CD8-positive, alpha-beta T cell (primary cell): ENCODE measurements at regions of chr1 and their contacts with region 1.

Region 1: DNA sequence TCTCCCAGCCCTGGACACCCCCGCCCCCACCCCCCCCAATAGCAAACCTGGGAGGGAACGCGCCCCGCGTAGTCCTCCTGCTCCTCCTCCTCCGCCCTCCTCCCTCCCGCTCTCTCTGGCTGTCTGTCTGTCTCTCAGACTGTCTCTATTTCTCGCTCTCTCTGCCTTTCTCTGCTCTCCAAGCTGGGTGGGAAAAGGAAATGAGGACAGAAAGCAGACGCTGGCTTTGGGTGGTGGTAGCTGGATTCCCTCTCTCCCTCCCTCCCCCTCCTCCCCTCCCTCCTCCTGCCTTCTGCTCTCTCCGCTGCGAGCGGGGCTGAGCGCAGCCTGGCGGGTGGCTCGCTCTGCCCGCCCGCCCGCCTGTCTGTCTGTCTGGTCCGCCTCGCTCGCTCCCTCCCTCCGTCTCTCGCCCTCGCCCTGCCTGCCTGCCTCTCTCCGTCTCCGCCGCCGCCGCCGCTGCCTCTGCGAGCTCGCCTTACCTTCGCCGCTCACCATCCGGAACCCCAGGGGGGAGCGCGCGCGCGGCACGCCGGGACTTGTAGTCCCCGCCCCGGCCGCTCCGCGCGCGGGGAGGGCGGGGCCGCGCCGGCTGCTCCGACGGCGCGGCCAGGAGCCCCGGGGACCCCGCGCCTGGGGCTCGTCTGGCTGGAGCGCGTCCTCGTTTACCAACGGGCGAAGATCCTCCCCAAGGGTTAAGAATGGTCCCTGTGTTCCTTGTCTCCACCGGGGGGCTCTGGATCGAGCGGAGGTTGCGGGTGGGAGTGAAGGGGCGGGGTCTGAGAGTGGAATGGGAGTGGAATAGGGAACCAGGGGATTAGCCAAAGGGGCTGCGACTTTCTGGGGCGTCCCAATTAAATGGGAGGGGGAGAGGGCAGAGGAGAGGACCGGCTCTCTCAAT is at the start of gene AHDC1:
- DNase-seq: peak; percentile 82 to 96 (median 93)
- ATAC-seq: peak; percentile 81
- H3K4me3 ChIP-seq: peak within 1 kb of the TSS; percentile 70 to 86
- H3K4me3 Mint-ChIP-seq: peak within 1 kb of the TSS; percentile 88
- H3K27ac ChIP-seq: peak within 1 kb of the TSS; percentile 57 to 66
- H3K27ac Mint-ChIP-seq: peak within 1 kb of the TSS; percentile 85
- H3K4me1 ChIP-seq: peaks cover 62% of the 10 kb centered on the region
- H3K4me1 Mint-ChIP-seq: peaks cover 41% of the 10 kb centered on the region
- H3K27me3 ChIP-seq: no peaks in the 10 kb centered on the region
- H3K27me3 Mint-ChIP-seq: no peaks in the 10 kb centered on the region
- CTCF ChIP-seq: no peak
- total RNA-seq, gene AHDC1: 19.5 to 21.1 TPM

Region 2: DNA sequence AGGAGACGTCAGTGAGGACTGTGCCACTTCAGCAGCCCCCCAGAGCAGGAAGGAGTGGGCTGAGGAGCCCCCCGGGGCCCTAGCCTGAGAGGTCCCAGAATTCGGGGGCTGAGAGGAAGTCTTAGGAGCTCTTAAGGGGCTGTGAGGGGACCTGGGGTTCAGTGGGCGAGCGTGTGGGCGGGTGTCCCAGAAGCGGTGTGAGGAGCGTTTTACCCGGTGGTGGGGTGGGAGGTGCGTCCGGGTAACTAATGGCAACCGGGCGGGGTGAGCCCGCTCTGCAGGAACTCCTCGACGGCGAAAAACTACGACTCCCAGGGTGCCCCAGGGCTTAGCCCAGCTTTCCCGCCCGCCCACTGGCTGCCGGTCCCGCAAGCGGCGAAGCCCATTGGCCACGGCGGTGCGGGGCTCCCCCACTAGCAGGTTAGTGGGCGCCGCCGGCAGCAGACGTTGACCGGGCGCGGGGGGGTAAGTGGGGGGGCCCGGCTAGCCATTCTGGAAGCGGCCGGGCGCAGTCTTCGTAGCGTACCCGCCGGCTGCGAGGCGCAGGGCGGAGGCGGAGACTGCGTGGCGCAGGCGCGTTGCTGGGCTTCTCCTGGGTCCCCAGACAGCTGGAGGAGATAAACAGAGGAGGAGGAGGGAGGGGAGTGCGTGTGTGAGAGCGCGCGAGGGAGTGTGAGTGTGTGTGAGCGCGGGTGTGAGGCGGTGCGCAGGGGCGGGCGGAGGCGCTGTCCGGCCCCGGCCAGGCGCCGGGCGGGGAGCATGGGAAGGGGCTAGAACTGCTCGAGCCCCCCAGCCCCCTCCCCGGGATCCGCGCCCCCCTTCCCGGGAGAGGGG is 369.7 kb before region 1 on chr1 and contains the start of gene WDTC1:
- CTCF ChIA-PET with region 1: interaction called, 3 read pairs
- POLR2A ChIA-PET with region 1: no interaction called
- intact Hi-C with region 1: loop called in 1 of 2 experiments (anchors 10 kb)
- DNase-seq: peak; percentile 97 to 99 (median 98)
- ATAC-seq: peak; percentile 90
- H3K4me3 ChIP-seq: peak within 1 kb of the TSS; percentile 58 to 66
- H3K4me3 Mint-ChIP-seq: peak within 1 kb of the TSS; percentile 99
- H3K27ac ChIP-seq: peak within 1 kb of the TSS; percentile 74 to 93
- H3K27ac Mint-ChIP-seq: peak within 1 kb of the TSS; percentile 95
- H3K4me1 ChIP-seq: peaks cover 25% of the 10 kb centered on the region
- H3K4me1 Mint-ChIP-seq: peaks cover 37% of the 10 kb centered on the region
- H3K27me3 ChIP-seq: no peaks in the 10 kb centered on the region
- H3K27me3 Mint-ChIP-seq: no peaks in the 10 kb centered on the region
- CTCF ChIP-seq: no peak
- total RNA-seq, gene WDTC1: 17.8 to 18.1 TPM

Region 3: GRCh38 chr1:27332536-27333281 is 271.2 kb before region 1 on chr1:
- CTCF ChIA-PET with region 1: interaction called, 5 read pairs
- POLR2A ChIA-PET with region 1: no interaction called
- intact Hi-C with region 1: loop called in 1 of 2 experiments (anchors 1 kb)
- DNase-seq: peak; percentile 37 to 78 (median 64)
- ATAC-seq: peak; percentile 96
- H3K4me3 ChIP-seq: no peak overlapping the region
- H3K4me3 Mint-ChIP-seq: no peak overlapping the region
- H3K27ac ChIP-seq: no peak overlapping the region
- H3K27ac Mint-ChIP-seq: peak overlapping the region; percentile 27
- H3K4me1 ChIP-seq: peaks cover 13% of the 10 kb centered on the region
- H3K4me1 Mint-ChIP-seq: peaks cover 38% of the 10 kb centered on the region
- H3K27me3 ChIP-seq: no peaks in the 10 kb centered on the region
- H3K27me3 Mint-ChIP-seq: no peaks in the 10 kb centered on the region
- CTCF ChIP-seq: peak; percentile 86

Region 4: GRCh38 chr1:27402349-27402754 is 201.6 kb before region 1 on chr1:
- CTCF ChIA-PET with region 1: interaction called, 160 read pairs
- POLR2A ChIA-PET with region 1: interaction called, 3 read pairs
- intact Hi-C with region 1: loop called (anchors 1 kb)
- DNase-seq: peak in 3 of 9 experiments; percentile 23 to 50 (median 27)
- ATAC-seq: no peak
- H3K4me3 ChIP-seq: no peak overlapping the region
- H3K4me3 Mint-ChIP-seq: no peak overlapping the region
- H3K27ac ChIP-seq: peak overlapping the region in 1 of 2 experiments; percentile 31
- H3K27ac Mint-ChIP-seq: peak overlapping the region; percentile 91
- H3K4me1 ChIP-seq: peaks cover 19% of the 10 kb centered on the region
- H3K4me1 Mint-ChIP-seq: peaks cover 32% of the 10 kb centered on the region
- H3K27me3 ChIP-seq: no peaks in the 10 kb centered on the region
- H3K27me3 Mint-ChIP-seq: no peaks in the 10 kb centered on the region
- CTCF ChIP-seq: no peak

Region 5: GRCh38 chr1:27556781-27557595 is 46.9 kb before region 1 on chr1:
- CTCF ChIA-PET with region 1: interaction called, 101 read pairs
- POLR2A ChIA-PET with region 1: interaction called, 4 read pairs
- intact Hi-C with region 1: loop called (anchors 1 kb)
- DNase-seq: peak; percentile 62 to 85 (median 76)
- ATAC-seq: peak; percentile 96
- H3K4me3 ChIP-seq: no peak overlapping the region
- H3K4me3 Mint-ChIP-seq: peak overlapping the region; percentile 30
- H3K27ac ChIP-seq: no peak overlapping the region
- H3K27ac Mint-ChIP-seq: peak overlapping the region; percentile 58
- H3K4me1 ChIP-seq: peaks cover 24% of the 10 kb centered on the region
- H3K4me1 Mint-ChIP-seq: peaks cover 33% of the 10 kb centered on the region
- H3K27me3 ChIP-seq: no peaks in the 10 kb centered on the region
- H3K27me3 Mint-ChIP-seq: no peaks in the 10 kb centered on the region
- CTCF ChIP-seq: peak; percentile 95

Region 6: GRCh38 chr1:27643701-27644625 is 40.0 kb after region 1 on chr1:
- CTCF ChIA-PET with region 1: interaction called, 22 read pairs
- POLR2A ChIA-PET with region 1: interaction called, 6 read pairs
- intact Hi-C with region 1: loop called (anchors 1 to 5 kb)
- DNase-seq: peak; percentile 45 to 87 (median 75)
- ATAC-seq: peak; percentile 99
- H3K4me3 ChIP-seq: no peak overlapping the region
- H3K4me3 Mint-ChIP-seq: no peak overlapping the region
- H3K27ac ChIP-seq: peak overlapping the region in 1 of 2 experiments; percentile 27
- H3K27ac Mint-ChIP-seq: peak overlapping the region; percentile 37
- H3K4me1 ChIP-seq: peaks cover 18% of the 10 kb centered on the region
- H3K4me1 Mint-ChIP-seq: peaks cover 19% of the 10 kb centered on the region
- H3K27me3 ChIP-seq: no peaks in the 10 kb centered on the region
- H3K27me3 Mint-ChIP-seq: no peaks in the 10 kb centered on the region
- CTCF ChIP-seq: peak; percentile 86

Region 7: GRCh38 chr1:27725374-27726173 is 121.6 kb after region 1 on chr1 and contains the start of gene FAM76A:
- CTCF ChIA-PET with region 1: interaction called, 4 read pairs
- POLR2A ChIA-PET with region 1: interaction called, 5 read pairs
- intact Hi-C with region 1: loop called (anchors 1 to 5 kb)
- DNase-seq: peak; percentile 99 to 100 (median 99)
- ATAC-seq: peak; percentile 92
- H3K4me3 ChIP-seq: peak within 1 kb of the TSS; percentile 63 to 92
- H3K4me3 Mint-ChIP-seq: peak within 1 kb of the TSS; percentile 84
- H3K27ac ChIP-seq: peak within 1 kb of the TSS; percentile 94 to 96
- H3K27ac Mint-ChIP-seq: peak within 1 kb of the TSS; percentile 94
- H3K4me1 ChIP-seq: peaks cover 15% of the 10 kb centered on the region
- H3K4me1 Mint-ChIP-seq: peaks cover 26% of the 10 kb centered on the region
- H3K27me3 ChIP-seq: no peaks in the 10 kb centered on the region
- H3K27me3 Mint-ChIP-seq: no peaks in the 10 kb centered on the region
- CTCF ChIP-seq: peak; percentile 25
- total RNA-seq, gene FAM76A: 29.5 to 31.7 TPM